Activated T-helper 1 cell treated with anti-CD3 and anti-CD28 coated beads, Interleukin-12 subunit alpha, Interleukin-12 subunit beta, Interleukin-2, Interleukin-4 antibody, amounts not matched to agents 30 ng/mL and 10 ng/mL and 1 ng/mL, durations not matched to agents 14 hours and 24 hours and 36 hours (primary cell): ENCODE measurements at regions of chr3 and their contacts with region 1.

Region 1: DNA sequence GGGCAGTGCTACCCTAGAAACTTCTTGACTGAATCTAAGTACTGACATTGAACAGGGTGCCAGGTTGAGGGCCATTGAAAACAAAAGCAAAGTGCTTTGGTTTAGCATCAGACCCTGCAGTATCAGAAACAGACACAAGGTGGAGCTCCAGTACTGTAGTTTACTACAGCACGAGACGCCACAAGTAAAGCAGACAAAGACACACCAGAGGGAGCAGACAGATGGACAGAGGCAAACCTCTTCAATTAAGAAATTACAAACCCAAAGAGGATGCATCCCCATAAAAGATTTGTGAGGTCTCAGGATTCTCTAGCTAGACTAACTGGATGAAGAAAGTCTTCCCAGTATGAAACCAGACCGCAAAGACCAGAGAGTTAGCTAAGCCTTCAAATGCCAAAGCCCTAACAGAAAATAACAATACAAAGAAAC is 16.6 kb downstream of the TOP2B start:
- DNase-seq: peak; percentile 71
- H3K4me3 Mint-ChIP-seq: no peak overlapping the region
- H3K27ac Mint-ChIP-seq: peak overlapping the region; percentile 14
- H3K4me1 Mint-ChIP-seq: peaks cover 22% of the 10 kb centered on the region
- H3K27me3 Mint-ChIP-seq: no peaks in the 10 kb centered on the region

Region 2: GRCh38 chr3:25573386-25574171 is 74.5 kb before region 1 on chr3:
- intact Hi-C with region 1: no loop called
- DNase-seq: no peak
- H3K4me3 Mint-ChIP-seq: no peak overlapping the region
- H3K27ac Mint-ChIP-seq: no peak overlapping the region
- H3K4me1 Mint-ChIP-seq: no peaks in the 10 kb centered on the region
- H3K27me3 Mint-ChIP-seq: no peaks in the 10 kb centered on the region

Region 3: DNA sequence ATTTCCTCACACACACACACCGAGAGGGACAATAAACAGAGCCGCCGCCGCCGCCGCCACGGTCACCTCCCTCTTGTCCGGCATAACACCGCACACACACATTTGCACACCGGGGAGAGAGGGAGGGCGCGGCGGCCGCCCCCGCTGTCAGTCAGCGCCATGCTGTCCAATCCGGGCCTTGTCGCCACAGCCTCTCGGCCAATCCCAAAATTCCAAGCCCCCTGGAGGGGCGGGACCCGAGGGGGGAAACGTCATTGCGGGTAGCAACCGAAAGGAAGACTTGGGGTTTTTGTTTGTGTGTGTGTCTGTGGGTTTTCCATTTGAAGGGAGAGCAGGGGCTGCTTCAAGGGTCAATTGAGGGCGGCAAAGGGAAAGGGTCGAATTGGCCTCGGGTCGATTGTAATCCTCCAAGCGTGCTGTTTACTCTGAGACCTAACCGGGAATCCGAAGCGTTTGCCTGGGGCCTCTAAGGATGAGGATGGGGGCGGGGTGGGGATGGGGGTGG is 16.7 kb after region 1 on chr3 and contains the start of gene TOP2B:
- intact Hi-C with region 1: loop called (anchors 1 kb)
- DNase-seq: peak; percentile 95
- H3K4me3 Mint-ChIP-seq: peak within 1 kb of the TSS; percentile 95
- H3K27ac Mint-ChIP-seq: peak within 1 kb of the TSS; percentile 97
- H3K4me1 Mint-ChIP-seq: peaks cover 36% of the 10 kb centered on the region
- H3K27me3 Mint-ChIP-seq: peaks cover 2% of the 10 kb centered on the region
- total RNA-seq, gene TOP2B: 133 and 135 TPM in 2 replicates

Region 4: DNA sequence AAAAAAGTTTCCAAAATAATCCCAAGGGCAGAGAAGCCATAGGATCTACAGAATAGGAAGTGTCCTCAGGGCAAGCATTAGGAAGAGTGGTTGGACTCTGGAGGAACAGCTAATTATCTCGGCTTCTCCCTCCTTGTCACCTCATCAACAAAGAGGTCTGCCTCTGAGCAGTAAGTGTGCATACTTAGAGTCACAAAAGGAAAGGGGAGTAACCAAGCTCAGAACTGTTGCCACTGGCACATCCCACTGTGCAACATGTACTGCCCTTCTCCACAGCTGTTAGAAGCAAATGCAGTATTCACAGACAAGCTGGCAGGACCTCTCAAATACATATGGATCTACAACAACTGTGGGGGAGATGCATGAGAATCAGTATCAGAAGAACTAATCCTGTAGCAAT is 103.6 kb after region 1 on chr3:
- intact Hi-C with region 1: no loop called
- DNase-seq: no peak
- H3K4me3 Mint-ChIP-seq: no peak overlapping the region
- H3K27ac Mint-ChIP-seq: no peak overlapping the region
- H3K4me1 Mint-ChIP-seq: peaks cover 5% of the 10 kb centered on the region
- H3K27me3 Mint-ChIP-seq: no peaks in the 10 kb centered on the region

Region 5: DNA sequence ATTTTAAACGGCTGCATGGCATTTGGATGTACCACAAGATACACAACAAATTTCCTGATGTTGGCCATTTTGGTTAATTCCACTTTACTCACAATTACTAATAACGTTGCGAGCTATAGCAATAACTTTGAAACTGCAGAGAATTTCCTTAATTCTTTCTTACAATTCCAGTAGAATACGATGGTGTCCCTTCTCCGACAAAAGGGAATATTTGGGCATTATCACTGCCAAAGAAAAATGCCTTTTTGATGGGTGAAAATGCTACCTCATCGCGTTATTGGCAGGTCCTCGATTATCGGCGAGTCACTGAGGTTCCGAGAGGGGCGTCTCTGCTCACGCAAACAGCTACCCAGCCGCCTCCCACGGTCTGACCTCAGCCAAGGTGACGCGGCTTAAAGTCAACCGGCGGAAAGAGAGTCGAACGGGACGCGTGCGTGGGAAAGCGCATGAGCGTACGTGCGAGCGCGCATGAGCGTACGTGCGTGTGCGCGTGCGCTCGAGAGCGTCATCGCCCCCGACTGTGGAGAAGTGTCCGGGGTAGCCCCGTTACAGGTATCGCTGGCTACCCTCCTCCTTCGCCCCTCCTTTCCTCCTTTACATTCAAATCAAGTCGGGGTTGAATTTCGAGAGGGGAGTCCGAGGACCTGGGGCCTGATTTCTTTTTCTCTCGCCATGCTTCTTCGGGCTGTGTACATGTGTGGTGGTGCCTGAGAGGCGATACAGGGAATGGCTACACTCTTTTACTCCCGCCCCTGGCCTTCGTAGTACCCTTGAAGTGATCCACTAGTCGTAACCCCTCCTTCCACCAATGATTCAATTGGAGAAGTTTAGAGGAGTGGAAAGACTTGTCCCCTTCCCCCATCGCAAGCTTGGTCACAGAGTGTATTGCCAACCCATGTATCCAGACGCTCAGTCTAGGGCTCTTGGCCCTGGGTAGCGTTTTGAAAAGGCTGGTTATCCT is 141.8 kb after region 1 on chr3 and contains the start of gene OXSM:
- intact Hi-C with region 1: loop called (anchors 1 kb)
- DNase-seq: peak; percentile 90
- H3K4me3 Mint-ChIP-seq: peak within 1 kb of the TSS; percentile 95
- H3K27ac Mint-ChIP-seq: peak within 1 kb of the TSS; percentile 99
- H3K4me1 Mint-ChIP-seq: peaks cover 50% of the 10 kb centered on the region
- H3K27me3 Mint-ChIP-seq: no peaks in the 10 kb centered on the region
- total RNA-seq, gene OXSM: 15.2 and 15.4 TPM in 2 replicates

Region 6: DNA sequence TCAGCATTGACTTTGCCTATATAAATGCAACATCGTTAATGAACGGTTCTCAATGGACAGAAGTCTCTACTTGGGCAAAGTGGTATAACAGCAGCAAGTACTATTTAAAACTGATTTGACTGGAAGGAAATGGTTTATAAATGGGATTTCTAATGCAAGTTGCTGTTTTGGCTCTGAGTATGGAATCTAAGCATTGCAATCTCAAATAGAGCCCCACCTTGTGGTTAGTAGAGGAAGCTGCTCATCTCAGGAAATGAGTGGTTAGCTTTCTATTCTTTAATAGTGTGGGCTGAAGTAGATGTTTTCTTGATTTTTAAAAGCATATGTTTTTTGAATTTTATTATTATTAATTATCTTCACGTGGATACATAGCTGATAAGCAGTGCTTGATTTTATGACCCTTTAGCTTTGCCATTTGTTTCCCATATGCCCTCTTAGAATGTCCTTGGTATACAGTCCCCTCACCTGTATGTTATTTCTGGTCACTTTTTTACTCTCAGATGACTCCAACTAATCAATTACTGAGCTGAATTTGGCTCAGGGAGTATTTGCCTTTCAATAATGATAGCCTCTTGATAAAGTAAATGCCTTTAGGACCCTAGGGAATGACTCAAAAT is 208.9 kb after region 1 on chr3:
- intact Hi-C with region 1: loop called (anchors 1 kb)
- DNase-seq: no peak
- H3K4me3 Mint-ChIP-seq: no peak overlapping the region
- H3K27ac Mint-ChIP-seq: no peak overlapping the region
- H3K4me1 Mint-ChIP-seq: peaks cover 5% of the 10 kb centered on the region
- H3K27me3 Mint-ChIP-seq: peaks cover 2% of the 10 kb centered on the region

Region 7: DNA sequence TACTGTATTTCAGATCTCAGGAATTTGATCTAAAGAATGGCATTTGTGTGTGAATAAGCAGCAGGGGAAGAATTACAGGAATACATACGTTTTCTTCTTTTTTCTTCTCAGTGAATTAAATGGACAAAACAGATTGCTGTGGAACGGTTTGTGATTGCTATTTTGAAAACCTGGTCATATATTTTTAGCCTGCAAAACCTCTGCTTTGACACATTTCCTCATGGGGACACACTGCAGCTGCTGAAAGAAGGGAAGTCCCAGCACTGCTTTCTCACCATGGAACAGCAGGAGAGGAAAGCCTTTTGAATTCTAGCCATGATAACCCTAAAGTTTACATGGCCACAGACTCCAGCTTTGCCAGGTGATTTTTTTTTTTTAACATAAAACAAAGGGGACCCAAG is 456.7 kb after region 1 on chr3:
- intact Hi-C with region 1: loop called (anchors 10 kb)
- DNase-seq: no peak
- H3K4me3 Mint-ChIP-seq: no peak overlapping the region
- H3K27ac Mint-ChIP-seq: no peak overlapping the region
- H3K4me1 Mint-ChIP-seq: no peaks in the 10 kb centered on the region
- H3K27me3 Mint-ChIP-seq: no peaks in the 10 kb centered on the region